H1 (cell line): ENCODE measurements at regions of chr4 and their contacts with region 1.

Region 1: DNA sequence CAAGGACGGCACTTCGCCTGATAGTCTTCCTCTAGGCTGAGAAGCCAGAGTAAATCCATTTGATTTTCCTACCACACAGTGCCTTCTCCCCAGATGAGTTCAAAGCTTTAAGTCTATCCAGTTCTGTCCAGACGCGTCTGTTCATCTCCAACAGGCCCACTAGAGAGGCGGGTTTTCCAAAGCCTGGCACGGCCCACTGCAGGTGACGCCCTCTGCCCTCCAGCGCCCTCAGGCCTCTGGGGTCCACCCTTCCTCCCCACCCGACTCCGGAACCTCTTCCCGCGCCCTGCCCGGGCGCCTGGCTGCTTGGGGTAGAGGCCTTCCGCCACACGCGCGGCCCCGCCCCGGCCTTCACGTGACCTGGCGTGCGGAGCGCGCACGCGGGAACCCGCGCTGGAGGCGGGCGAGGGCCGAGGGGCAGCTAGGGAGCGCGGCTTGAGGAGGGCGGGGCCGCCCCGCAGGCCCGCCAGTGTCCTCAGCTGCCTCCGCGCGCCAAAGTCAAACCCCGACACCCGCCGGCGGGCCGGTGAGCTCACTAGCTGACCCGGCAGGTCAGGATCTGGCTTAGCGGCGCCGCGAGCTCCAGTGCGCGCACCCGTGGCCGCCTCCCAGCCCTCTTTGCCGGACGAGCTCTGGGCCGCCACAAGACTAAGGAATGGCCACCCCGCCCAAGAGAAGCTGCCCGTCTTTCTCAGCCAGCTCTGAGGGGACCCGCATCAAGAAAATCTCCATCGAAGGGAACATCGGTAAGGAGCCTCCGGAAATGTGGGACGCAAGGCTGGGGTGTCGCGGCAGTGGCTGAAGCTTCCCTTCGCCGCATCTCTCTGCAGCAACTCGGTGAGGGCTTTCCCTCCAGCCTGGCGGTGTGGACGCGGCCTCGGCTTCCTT is at the start of gene DCK:
- DNase-seq: peak; percentile 84 to 91
- H3K4me3 ChIP-seq: peak within 1 kb of the TSS; percentile 87 to 95 (median 89)
- H3K27ac ChIP-seq: peak within 1 kb of the TSS; percentile 80
- H3K4me1 ChIP-seq: peaks cover 2 to 9% (median 5%) of the 10 kb centered on the region in 4 experiments; a peak in 4 of 7 replicates
- H3K27me3 ChIP-seq: no peaks in the 10 kb centered on the region
- CTCF ChIP-seq: peak in 1 of 3 experiments; percentile 3; a peak in 1 of 4 replicates
- EP300 ChIP-seq: no peak
- POLR2A ChIP-seq: peak; percentile 82 to 88
- RAD21 ChIP-seq: peak in 1 of 2 experiments; percentile 12; a peak in 1 of 4 replicates
- total RNA-seq, gene DCK: 15.7 and 18.1 TPM in 2 replicates

Region 2: DNA sequence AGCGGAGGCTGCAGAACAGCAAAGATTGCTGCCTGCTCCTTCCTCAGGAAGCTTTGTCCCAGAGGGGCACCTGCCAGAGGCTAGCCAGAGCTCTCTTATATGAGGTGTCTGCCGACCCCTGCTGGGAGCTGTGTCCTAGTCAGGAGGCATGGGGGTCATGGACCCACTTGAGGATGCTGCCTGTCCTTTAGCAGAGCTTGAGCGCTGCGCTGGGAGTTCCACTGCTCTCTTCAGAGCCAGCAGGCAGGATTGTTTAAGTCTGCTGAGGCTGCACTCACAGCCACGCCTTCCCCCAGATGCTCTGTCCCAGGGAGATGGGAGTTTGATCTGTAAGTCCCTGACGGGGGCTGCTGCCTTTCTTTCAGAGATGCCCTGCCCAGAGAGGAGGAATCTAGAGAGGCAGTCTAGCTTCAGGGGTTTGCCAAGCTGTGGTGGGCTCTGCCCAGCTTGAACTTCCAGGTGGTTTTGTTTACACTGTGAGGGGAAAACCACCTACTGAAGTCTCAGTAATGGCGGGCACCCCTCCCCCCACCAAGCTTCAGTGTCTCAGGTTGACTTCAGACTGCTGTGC is 10.9 kb after region 1 on chr4:
- CTCF ChIA-PET with region 1: interaction called, 40 read pairs
- POLR2A ChIA-PET with region 1: interaction called, 22 read pairs
- DNase-seq: peak in 1 of 2 experiments; percentile 62
- H3K4me3 ChIP-seq: peak overlapping the region in 1 of 4 experiments; percentile 41; a peak in 1 of 8 replicates
- H3K27ac ChIP-seq: peak overlapping the region; percentile 70
- H3K4me1 ChIP-seq: peaks cover 0 to 11% (median 7%) of the 10 kb centered on the region in 4 experiments; a peak in 6 of 7 replicates
- H3K27me3 ChIP-seq: no peaks in the 10 kb centered on the region
- CTCF ChIP-seq: no peak
- EP300 ChIP-seq: no peak
- POLR2A ChIP-seq: no peak
- RAD21 ChIP-seq: no peak

Region 3: GRCh38 chr4:71396382-71396781 is 403.0 kb after region 1 on chr4:
- CTCF ChIA-PET with region 1: no interaction called
- POLR2A ChIA-PET with region 1: no interaction called
- DNase-seq: no peak
- H3K4me3 ChIP-seq: no peak overlapping the region
- H3K27ac ChIP-seq: no peak overlapping the region
- H3K4me1 ChIP-seq: no peaks in the 10 kb centered on the region
- H3K27me3 ChIP-seq: no peaks in the 10 kb centered on the region
- CTCF ChIP-seq: no peak
- EP300 ChIP-seq: no peak
- POLR2A ChIP-seq: no peak
- RAD21 ChIP-seq: no peak